ENCODE measurements at regions of chr11 and their contacts with region 1.

Region 1: GRCh38 chr11:43567396-43567975 is 113.1 kb upstream of the HSD17B12 start:
- DNase-seq: no peak

Region 2: DNA sequence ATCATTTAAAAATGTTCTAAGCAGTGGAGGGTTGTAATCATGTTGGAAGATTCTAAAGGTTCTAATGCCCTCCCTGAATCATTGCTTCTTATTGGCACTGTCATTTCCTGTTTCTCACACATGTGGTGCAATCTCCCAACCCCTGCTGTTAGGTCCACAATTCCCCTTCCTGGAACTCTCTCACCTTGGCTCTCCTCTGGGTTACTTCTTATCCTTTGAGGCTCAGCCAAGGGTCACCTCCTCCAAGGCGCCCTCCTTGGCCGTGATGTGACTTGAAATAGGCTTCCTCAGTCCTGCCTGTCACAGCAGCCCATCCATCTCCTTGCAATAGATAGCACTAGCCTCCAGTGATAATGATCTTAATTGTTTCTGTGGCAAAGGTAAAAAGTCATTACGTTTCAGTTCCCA is 59.0 kb before region 1 on chr11:
- intact Hi-C with region 1: loop called in 1 of 2 experiments (anchors 5 kb)
- DNase-seq: no peak

Region 3: GRCh38 chr11:43518408-43519160 is 48.9 kb before region 1 on chr11:
- intact Hi-C with region 1: no loop called
- DNase-seq: no peak

Region 4: GRCh38 chr11:43738590-43739409 is 171.3 kb after region 1 on chr11:
- intact Hi-C with region 1: no loop called
- DNase-seq: no peak

Measured in posterior vena cava (tissue), 2 donors.